ENCODE measurements at regions of chr9 and their contacts with region 1.

Region 1: GRCh38 chr9:101028346-101029314 is at the start of gene PLPPR1:
- DNase-seq: peak; percentile 16 to 61 (median 27)
- ATAC-seq: peak in 3 of 4 donors; percentile 76 to 89 (median 87)
- H3K4me3 ChIP-seq: peak within 1 kb of the TSS; percentile 26 to 63 (median 50)
- H3K27ac ChIP-seq: no peak within 1 kb of the TSS
- H3K4me1 ChIP-seq: peaks cover 0 to 27% (median 0%) of the 10 kb centered on the region in 12 donors
- H3K27me3 ChIP-seq: peaks cover 8 to 56% (median 21%) of the 10 kb centered on the region in 9 donors
- CTCF ChIP-seq: no peak
- POLR2A ChIP-seq: no peak
- total RNA-seq, gene PLPPR1: 0.33 TPM in 1 of 9 donors, not detected in the others

Region 2: GRCh38 chr9:100990605-100991381 is 37.8 kb before region 1 on chr9:
- intact Hi-C with region 1: no loop called
- DNase-seq: no peak
- ATAC-seq: no peak
- H3K4me3 ChIP-seq: no peak overlapping the region
- H3K27ac ChIP-seq: no peak overlapping the region
- H3K4me1 ChIP-seq: no peaks in the 10 kb centered on the region
- H3K27me3 ChIP-seq: no peaks in the 10 kb centered on the region
- CTCF ChIP-seq: no peak
- POLR2A ChIP-seq: no peak

Region 3: GRCh38 chr9:101014285-101014965 is 14.2 kb before region 1 on chr9:
- intact Hi-C with region 1: loop called in 1 of 10 experiments (anchors 1 kb)
- DNase-seq: no peak
- ATAC-seq: no peak
- H3K4me3 ChIP-seq: no peak overlapping the region
- H3K27ac ChIP-seq: no peak overlapping the region
- H3K4me1 ChIP-seq: no peaks in the 10 kb centered on the region
- H3K27me3 ChIP-seq: no peaks in the 10 kb centered on the region
- CTCF ChIP-seq: no peak
- POLR2A ChIP-seq: no peak

Region 4: DNA sequence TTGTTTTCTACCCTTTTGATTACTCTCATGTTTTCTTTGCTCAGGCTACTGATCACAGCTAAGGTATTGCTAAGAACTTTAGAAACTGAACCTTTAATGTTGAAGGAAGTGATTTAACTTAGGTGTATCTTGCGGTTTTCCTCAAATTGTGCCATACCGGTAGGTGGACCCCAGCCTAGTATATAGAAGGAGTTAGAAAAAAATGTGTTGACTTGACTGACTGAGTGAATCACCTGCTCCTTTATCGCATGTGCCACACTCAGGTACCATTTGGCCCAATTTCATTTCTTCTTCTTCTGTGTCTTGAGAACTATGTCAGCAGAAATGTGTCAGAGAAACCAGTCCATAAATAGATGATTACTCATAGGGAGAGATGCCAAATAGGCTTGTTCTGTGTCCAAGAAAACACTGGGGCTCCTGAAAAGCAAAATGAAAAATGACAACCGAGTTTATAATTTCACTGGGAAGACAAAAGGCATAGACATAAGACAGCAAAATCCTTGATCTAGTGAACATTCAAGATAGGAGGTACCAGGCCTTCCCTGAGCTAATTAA is 19.3 kb after region 1 on chr9:
- intact Hi-C with region 1: loop called in 1 of 10 experiments (anchors 2 kb)
- DNase-seq: no peak
- ATAC-seq: peak in 2 of 4 donors; percentile 50 to 63
- H3K4me3 ChIP-seq: no peak overlapping the region
- H3K27ac ChIP-seq: no peak overlapping the region
- H3K4me1 ChIP-seq: peaks cover 0 to 9% (median 0%) of the 10 kb centered on the region in 12 donors
- H3K27me3 ChIP-seq: no peaks in the 10 kb centered on the region
- CTCF ChIP-seq: no peak
- POLR2A ChIP-seq: no peak

Measured in heart left ventricle (tissue), 16 donors.